Activated CD8-positive, alpha-beta T cell treated with anti-CD3 and anti-CD28 coated beads for 36 hours (primary cell): ENCODE measurements at regions of chr11 and their contacts with region 1.

Region 1: GRCh38 chr11:64240394-64241174 is at the start of gene FKBP2:
- DNase-seq: peak; percentile 98
- ATAC-seq: peak; percentile 64
- H3K4me3 Mint-ChIP-seq: peak within 1 kb of the TSS; percentile 93
- H3K27ac Mint-ChIP-seq: peak within 1 kb of the TSS; percentile 98
- H3K4me1 Mint-ChIP-seq: peaks cover 44% of the 10 kb centered on the region
- H3K27me3 Mint-ChIP-seq: no peaks in the 10 kb centered on the region
- CTCF ChIP-seq: no peak
- total RNA-seq, gene FKBP2: 23.5 to 26.9 TPM

Region 2: DNA sequence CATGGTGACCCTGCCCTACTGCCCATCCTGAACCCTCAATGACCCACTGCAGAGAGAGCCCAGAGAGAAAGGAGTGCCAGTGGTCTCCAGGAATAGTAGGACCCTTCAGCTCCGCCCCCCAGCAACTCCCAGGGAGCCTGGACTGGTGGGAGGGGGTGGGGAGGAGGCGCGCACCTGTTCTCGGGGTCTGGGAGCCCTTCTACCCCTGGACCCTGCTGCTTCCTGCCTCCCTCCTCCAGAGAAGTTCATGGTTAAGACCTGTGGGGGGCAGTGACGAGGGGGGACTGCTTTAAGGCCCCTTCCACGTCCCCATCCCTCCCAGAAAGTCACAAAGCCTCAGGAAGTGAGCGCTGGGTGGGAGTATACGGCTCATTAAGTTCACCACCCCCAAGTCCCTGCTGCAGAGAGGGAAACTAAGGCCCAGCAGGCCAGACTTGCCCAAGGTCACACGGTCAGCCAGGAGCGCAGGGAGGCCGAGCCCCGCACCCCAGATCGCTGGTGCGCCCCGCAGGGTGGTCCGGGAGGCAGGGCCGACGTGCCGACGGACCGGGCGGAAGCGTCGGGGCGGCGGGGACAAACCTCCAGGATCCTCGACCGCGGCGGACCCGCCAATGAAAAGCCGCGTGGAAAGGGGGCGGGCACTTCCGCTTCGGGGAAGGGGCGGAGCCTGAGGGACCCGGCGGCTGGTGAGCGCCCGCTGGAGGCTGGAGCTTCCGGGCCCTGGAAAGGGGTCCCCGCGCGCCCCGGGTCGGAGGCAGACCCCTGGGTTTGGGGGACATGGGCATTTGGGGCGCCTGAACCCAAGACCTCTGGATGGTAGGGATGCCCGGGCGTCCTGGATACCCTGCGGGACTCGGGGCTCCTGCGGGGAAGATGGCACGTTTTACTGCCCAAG is 14.7 kb before region 1 on chr11 and contains the starts of genes NUDT22 and TRPT1:
- CTCF ChIA-PET with region 1: interaction called, 10 read pairs
- POLR2A ChIA-PET with region 1: interaction called, 41 read pairs
- intact Hi-C with region 1: no loop called
- DNase-seq: peak; percentile 94
- ATAC-seq: peak; percentile 71
- H3K4me3 Mint-ChIP-seq: peak within 1 kb of the TSS; percentile 89
- H3K27ac Mint-ChIP-seq: peak within 1 kb of the TSS; percentile 87
- H3K4me1 Mint-ChIP-seq: peaks cover 30% of the 10 kb centered on the region
- H3K27me3 Mint-ChIP-seq: no peaks in the 10 kb centered on the region
- CTCF ChIP-seq: peak; percentile 42
- total RNA-seq, gene NUDT22: 66.0 to 69.2 TPM
- total RNA-seq, gene TRPT1: 33.7 to 41.5 TPM

Region 3: GRCh38 chr11:64324692-64325469 is 84.3 kb after region 1 on chr11:
- CTCF ChIA-PET with region 1: no interaction called
- POLR2A ChIA-PET with region 1: no interaction called
- intact Hi-C with region 1: no loop called
- DNase-seq: no peak
- ATAC-seq: no peak
- H3K4me3 Mint-ChIP-seq: no peak overlapping the region
- H3K27ac Mint-ChIP-seq: no peak overlapping the region
- H3K4me1 Mint-ChIP-seq: peaks cover 6% of the 10 kb centered on the region
- H3K27me3 Mint-ChIP-seq: no peaks in the 10 kb centered on the region
- CTCF ChIP-seq: no peak

Region 4: DNA sequence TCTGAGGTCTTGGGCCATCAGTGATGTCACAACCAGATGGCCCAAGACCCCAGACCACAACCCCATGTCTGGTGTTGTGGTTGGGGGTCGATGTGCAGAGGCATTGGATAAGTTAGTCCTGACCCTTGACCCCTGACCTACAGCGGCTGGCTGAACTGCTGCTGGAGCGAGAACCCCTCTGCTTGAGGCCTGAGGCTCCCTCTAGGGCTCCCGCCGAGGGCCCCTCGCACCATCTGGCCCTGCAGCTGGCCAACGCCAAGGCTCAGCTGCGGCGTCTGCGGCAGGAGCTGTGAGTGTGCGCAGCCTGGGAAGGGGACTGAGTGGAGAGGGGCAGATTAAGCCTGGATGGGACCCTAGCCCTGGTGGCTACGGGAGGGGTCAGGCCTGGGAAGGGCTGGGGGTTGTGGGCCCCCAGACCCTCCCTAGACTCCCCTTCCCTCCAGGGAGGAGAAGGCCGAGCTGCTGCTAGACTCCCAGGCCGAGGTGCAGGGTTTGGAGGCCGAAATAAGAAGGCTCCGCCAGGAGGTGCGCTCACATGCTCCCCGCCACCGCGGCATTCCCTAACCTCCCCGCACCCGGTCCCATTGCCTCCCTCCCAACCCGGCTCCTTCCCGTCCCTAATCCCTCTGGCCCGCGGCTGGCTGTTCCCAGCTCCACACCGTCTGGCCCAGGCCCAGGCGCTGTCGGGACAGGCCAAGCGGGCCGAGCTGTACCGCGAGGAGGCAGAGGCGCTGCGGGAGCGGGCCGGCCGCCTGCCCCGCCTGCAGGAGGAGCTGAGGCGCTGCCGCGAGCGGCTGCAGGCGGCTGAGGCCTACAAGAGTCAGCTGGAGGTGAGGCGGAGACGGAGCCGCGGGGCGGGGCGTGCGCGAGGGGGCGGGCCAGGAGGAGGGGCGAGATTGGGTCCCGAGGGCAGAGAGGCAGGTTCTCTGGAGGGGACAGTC is 101.5 kb after region 1 on chr11:
- CTCF ChIA-PET with region 1: no interaction called
- POLR2A ChIA-PET with region 1: no interaction called
- intact Hi-C with region 1: no loop called
- DNase-seq: peak; percentile 94
- ATAC-seq: peak; percentile 75
- H3K4me3 Mint-ChIP-seq: peak overlapping the region; percentile 84
- H3K27ac Mint-ChIP-seq: no peak overlapping the region
- H3K4me1 Mint-ChIP-seq: peaks cover 36% of the 10 kb centered on the region
- H3K27me3 Mint-ChIP-seq: no peaks in the 10 kb centered on the region
- CTCF ChIP-seq: peak; percentile 44

Region 5: DNA sequence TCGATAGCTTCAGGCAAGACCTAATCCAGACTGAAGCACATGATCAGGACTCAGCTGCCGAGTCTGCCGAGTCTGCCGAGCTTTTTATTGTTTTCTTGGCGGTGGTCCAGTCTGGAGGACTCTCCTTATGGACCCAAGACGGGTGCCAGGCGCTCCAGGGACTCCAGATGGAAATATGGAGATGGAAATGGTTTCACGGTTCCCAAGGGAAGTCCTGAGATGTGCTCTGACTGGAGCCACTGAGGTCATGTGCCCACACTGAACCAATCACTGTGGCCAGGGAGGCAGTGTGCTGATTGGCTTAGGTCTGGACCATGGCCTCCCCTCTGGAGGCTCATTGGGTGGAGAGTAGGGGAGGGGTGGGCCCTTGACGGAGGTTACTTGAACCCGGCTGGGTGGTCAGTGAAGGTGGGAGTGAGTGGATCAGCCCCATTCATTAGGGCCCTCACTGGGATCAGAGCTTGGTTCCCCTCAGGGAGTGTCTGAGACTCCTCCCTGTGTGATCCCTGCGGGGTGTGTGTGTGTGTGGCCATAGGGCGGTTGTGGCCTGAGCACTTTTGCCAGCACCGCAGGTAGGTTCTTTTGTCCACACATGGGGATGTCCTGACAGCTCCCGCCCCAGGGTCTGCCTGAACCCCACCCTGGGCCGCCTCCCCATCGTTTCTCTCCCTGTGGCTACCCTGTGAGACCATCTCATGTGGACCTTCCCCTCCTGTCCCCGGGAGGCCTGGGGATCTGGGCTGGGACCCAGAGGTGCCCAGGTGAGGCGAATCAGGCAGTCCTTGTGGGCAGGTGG is 132.4 kb after region 1 on chr11:
- CTCF ChIA-PET with region 1: no interaction called
- POLR2A ChIA-PET with region 1: no interaction called
- intact Hi-C with region 1: no loop called
- DNase-seq: no peak
- ATAC-seq: peak; percentile 45
- H3K4me3 Mint-ChIP-seq: no peak overlapping the region
- H3K27ac Mint-ChIP-seq: no peak overlapping the region
- H3K4me1 Mint-ChIP-seq: peaks cover 3% of the 10 kb centered on the region
- H3K27me3 Mint-ChIP-seq: no peaks in the 10 kb centered on the region
- CTCF ChIP-seq: no peak